ENCODE measurements at regions of chr10 and their contacts with region 1.

Region 1: DNA sequence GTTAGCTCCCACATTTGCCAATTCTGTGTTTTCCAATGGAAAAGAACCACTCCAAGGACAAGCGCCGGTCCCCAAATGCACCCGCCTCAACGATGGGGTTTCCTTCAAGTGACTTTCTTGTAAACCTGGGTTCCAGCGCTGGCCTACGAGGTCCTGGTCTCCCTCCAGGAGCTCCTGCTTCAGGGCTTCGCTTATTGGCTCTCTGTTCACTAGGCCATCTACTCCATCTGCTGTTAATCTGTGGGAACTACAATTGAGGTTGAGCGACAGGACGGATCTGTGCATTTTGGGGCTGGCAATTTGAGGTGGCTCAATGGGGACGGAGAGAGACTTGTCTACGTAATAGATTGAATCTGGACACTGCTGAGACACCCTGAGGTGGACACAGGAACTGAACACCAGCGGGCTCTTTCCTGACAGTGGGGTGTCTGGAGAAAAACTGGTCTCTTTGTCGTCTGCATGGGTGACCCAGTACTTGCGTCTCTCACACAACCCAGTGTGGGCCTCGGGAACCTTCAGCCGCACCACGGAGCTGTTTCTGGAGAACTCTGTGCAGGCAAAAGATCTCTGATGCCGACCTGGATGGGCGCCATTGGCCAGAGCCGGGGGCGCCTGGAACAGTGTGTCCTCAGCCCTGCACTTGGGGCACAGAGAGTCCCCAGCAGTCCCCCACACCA is 115.9 kb upstream of the ADAM12 start:
- DNase-seq: no peak
- ATAC-seq: peak; percentile 57
- H3K4me3 Mint-ChIP-seq: no peak overlapping the region
- H3K27ac Mint-ChIP-seq: no peak overlapping the region
- H3K4me1 Mint-ChIP-seq: no peaks in the 10 kb centered on the region
- H3K27me3 Mint-ChIP-seq: no peaks in the 10 kb centered on the region
- CTCF ChIP-seq: no peak

Region 2: GRCh38 chr10:125868372-125868975 is 635.7 kb before region 1 on chr10:
- CTCF ChIA-PET with region 1: interaction called, 11 read pairs
- POLR2A ChIA-PET with region 1: no interaction called
- intact Hi-C with region 1: loop called (anchors 1 kb)
- DNase-seq: no peak
- ATAC-seq: no peak
- H3K4me3 Mint-ChIP-seq: no peak overlapping the region
- H3K27ac Mint-ChIP-seq: no peak overlapping the region
- H3K4me1 Mint-ChIP-seq: no peaks in the 10 kb centered on the region
- H3K27me3 Mint-ChIP-seq: no peaks in the 10 kb centered on the region
- CTCF ChIP-seq: peak; percentile 44

Region 3: GRCh38 chr10:125933693-125934092 is 570.5 kb before region 1 on chr10:
- CTCF ChIA-PET with region 1: interaction called, 19 read pairs
- POLR2A ChIA-PET with region 1: no interaction called
- intact Hi-C with region 1: loop called (anchors 1 kb)
- DNase-seq: no peak
- ATAC-seq: no peak
- H3K4me3 Mint-ChIP-seq: no peak overlapping the region
- H3K27ac Mint-ChIP-seq: no peak overlapping the region
- H3K4me1 Mint-ChIP-seq: no peaks in the 10 kb centered on the region
- H3K27me3 Mint-ChIP-seq: peaks cover 20% of the 10 kb centered on the region
- CTCF ChIP-seq: no peak

Region 4: DNA sequence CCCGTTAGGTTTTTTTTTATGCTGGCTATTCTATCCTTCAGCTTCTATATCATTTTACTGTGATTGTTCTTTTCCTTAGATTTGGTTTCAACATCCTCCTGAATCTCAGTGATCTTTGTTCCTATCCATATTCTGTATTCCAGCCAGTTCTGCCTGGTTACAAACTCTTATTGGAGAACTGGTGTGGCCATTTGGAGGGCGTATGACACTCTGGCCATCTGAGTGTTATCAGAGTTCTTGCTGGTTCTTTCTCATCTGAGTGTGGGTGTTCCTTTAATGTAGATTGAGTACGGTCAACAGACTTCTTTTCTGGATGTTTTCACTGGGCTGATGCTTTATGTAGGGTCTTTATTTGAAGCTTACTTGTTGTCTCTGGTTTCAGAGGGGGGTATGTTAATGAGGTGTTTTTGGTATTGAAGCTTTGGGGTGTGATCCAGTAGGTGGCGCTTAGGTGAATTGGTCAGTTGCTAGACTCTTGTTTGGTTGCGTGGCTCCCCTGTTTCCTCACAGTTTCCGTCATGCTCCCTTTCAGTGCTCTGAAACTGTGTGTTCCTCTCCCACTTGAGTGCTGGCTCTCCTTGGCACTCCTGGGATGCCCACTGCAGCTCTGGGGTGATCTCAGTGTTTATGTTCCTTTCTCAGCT is 527.1 kb before region 1 on chr10:
- CTCF ChIA-PET with region 1: interaction called, 60 read pairs
- POLR2A ChIA-PET with region 1: no interaction called
- intact Hi-C with region 1: loop called (anchors 1 kb)
- DNase-seq: no peak
- ATAC-seq: no peak
- H3K4me3 Mint-ChIP-seq: no peak overlapping the region
- H3K27ac Mint-ChIP-seq: no peak overlapping the region
- H3K4me1 Mint-ChIP-seq: peaks cover 2% of the 10 kb centered on the region
- H3K27me3 Mint-ChIP-seq: peaks cover 10% of the 10 kb centered on the region
- CTCF ChIP-seq: no peak

Region 5: DNA sequence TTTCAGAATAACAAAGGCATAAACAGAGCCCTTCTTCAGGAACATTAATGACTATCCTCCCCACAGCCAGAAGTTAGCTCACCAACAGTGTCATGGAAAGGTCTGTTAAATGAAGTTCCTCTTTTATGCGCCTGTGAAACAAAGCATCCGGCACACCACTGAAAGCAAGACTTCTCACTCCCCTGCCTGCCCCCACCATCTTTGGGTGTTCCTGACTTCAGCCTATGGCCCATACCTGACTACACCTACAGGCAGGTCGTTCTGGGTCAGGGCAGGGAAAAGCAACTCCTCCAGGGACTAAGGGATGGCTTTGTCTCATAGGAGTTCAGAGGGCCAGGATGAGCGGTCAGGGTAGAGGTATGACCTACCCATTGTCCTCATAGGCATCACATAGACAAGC is 402.4 kb before region 1 on chr10:
- CTCF ChIA-PET with region 1: interaction called, 8 read pairs
- POLR2A ChIA-PET with region 1: no interaction called
- intact Hi-C with region 1: loop called (anchors 2 kb)
- DNase-seq: peak; percentile 21
- ATAC-seq: peak; percentile 93
- H3K4me3 Mint-ChIP-seq: no peak overlapping the region
- H3K27ac Mint-ChIP-seq: peak overlapping the region; percentile 65
- H3K4me1 Mint-ChIP-seq: peaks cover 21% of the 10 kb centered on the region
- H3K27me3 Mint-ChIP-seq: no peaks in the 10 kb centered on the region
- CTCF ChIP-seq: no peak